BJ (cell line): ENCODE measurements at regions of chr1 and their contacts with region 1.

Region 1: GRCh38 chr1:40373338-40374283 is at the start of gene SMAP2:
- DNase-seq: peak; percentile 68
- H3K4me3 ChIP-seq: peak within 1 kb of the TSS; percentile 98
- H3K27me3 ChIP-seq: no peaks in the 10 kb centered on the region
- CTCF ChIP-seq: no peak
- polyA plus RNA-seq, gene SMAP2: 9.0 and 10.2 TPM in 2 replicates

Region 2: DNA sequence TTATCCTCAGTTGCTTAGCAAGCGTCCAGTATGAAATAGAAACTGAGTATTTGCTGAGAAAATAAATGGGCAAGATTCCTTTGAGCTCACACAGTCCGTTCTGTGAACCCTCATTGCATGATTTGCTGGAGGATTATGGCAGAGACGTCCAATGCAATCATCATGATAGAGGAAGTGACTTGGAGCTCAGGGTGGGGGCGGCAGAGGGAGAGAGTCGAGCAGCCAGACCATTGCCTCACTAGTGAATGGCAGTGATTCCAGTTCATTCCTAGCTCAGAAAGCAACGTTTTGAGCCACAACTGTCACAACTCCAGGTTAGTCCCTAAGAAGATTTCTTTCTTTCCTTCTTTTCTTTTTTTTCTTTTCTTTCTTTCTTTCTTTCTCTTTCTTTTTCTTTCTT is 29.0 kb before region 1 on chr1:
- CTCF ChIA-PET with region 1: no interaction called
- POLR2A ChIA-PET with region 1: interaction called, 10 read pairs
- DNase-seq: peak; percentile 4
- H3K4me3 ChIP-seq: no peak overlapping the region
- H3K27me3 ChIP-seq: peaks cover 2% of the 10 kb centered on the region
- CTCF ChIP-seq: no peak

Region 3: DNA sequence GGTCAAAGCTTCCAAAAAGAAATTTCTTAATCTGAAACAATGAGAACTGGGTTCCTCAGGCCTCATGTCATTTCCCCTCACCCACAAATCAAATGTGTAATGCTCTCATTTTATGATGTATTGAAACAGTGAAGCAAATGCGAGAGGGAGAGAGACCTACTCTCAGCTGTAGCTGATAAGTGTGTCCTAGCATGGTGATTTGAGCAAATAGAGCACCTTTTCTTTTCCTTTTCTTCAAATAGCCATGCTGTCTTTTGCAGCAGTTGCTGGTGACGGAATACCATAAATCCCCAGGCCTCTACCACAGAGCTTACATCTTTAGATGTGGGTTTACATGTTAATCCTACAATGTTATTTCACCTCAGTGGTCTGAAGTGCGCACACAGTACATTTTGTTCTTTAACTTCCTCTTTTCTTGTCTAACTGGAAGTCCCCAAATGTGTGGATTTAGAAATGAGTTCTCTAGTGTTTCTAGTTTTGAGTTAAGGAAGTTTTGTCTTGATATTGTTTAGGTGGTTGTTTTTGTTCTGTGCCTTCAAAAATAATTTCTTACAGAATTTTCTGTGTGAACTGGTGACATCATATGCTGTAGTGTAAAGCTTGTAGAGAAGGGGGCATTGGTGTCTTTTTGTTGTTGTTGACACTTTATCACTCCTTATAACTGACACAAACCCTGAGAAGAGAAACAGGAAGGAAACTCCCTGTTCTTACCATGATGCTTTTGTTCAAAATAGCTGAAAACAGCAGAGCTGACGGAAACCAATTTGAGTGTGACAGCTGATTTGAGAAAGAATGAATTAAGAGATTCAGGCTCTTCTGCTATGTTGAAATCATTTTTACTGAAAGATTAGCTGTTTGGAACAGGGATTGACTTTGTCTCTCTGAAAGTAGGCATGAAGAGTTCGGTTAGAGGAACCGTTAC is 12.1 kb after region 1 on chr1:
- CTCF ChIA-PET with region 1: interaction called, 4 read pairs
- POLR2A ChIA-PET with region 1: interaction called, 17 read pairs
- DNase-seq: no peak
- H3K4me3 ChIP-seq: no peak overlapping the region
- H3K27me3 ChIP-seq: no peaks in the 10 kb centered on the region
- CTCF ChIP-seq: no peak